Heart right ventricle (tissue), 16 donors: ENCODE measurements at regions of chr6 and their contacts with region 1.

Region 1: DNA sequence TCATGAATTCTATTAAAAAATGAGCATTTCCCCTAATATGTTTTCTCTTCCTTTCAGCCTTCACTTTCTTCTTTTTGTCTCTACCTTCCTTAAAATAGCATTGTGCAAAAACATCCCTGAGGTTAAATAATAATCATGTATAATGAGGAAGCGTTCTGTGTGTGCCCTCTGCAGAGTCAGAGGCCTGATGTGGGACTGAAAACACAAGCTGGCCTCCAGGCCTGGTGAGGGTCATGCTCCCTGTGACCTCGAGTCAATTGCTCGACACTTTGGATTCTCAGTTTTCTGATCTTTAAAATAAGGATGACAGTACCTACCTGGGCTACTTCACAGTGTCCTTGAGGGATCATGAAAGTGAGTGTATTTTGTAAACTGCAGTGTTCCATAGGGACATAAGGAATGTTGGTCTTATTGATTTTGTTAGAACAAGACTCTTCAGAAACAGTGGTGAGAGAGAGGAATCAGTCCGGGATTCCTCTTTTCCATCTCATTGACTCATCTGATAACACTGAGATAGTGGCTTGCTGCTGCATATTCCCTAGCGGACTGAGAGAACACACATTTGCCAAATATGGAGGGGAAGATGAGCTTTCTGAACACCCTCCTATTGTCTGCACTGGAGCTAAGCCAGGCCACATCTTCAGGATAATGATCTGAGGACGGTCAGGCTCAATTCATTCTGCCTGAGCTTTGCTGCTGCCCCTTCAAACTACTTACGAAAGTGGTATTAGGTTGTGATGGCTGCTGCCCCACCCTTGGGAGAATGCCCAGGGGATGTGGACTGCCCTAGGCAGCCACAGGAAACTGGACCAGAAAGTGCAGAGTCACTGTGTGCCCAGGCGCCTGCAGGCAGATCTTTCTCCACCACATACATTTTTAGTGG is 39.6 kb upstream of the PDE7B start:
- DNase-seq: peak; percentile 12 to 24
- ATAC-seq: peak in 7 of 8 donors; percentile 17 to 64 (median 47)
- H3K4me3 ChIP-seq: no peak overlapping the region
- H3K27ac ChIP-seq: peak overlapping the region in 8 of 10 donors; percentile 6 to 68 (median 31)
- H3K4me1 ChIP-seq: peaks cover 0 to 23% (median 11%) of the 10 kb centered on the region in 9 donors
- H3K27me3 ChIP-seq: no peaks in the 10 kb centered on the region
- CTCF ChIP-seq: no peak

Region 2: GRCh38 chr6:135693811-135694370 is 118.0 kb before region 1 on chr6:
- intact Hi-C with region 1: loop called in 1 of 10 experiments (anchors 10 kb)
- DNase-seq: no peak
- ATAC-seq: no peak
- H3K4me3 ChIP-seq: no peak overlapping the region
- H3K27ac ChIP-seq: no peak overlapping the region
- H3K4me1 ChIP-seq: no peaks in the 10 kb centered on the region
- H3K27me3 ChIP-seq: no peaks in the 10 kb centered on the region
- CTCF ChIP-seq: no peak

Region 3: DNA sequence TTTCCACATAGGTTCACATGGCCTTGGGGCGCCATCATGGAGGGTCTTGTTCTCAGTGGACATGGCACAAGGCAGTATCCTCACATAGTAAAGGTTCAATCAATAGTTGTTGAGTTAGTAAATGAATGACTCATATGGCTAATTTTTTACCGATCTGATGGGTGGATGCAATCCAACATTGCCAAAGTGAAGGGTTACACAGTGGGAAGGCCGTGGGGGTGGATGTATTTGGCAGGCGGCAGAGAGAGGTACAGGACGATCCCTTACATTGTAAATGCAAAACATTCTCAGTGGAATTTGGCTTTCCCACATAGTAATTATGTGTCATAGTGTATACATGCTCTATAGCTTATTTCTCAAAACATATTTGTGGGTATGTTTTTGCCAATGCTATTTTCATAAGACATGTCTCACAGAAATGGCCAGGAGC is 18.6 kb after region 1 on chr6:
- intact Hi-C with region 1: no loop called
- DNase-seq: no peak
- ATAC-seq: no peak
- H3K4me3 ChIP-seq: no peak overlapping the region
- H3K27ac ChIP-seq: no peak overlapping the region
- H3K4me1 ChIP-seq: no peaks in the 10 kb centered on the region
- H3K27me3 ChIP-seq: peaks cover 0 to 5% (median 0%) of the 10 kb centered on the region in 7 donors
- CTCF ChIP-seq: no peak

Region 4: GRCh38 chr6:135851442-135852271 is 39.8 kb after region 1 on chr6 and contains the start of gene PDE7B:
- intact Hi-C with region 1: loop called in 1 of 10 experiments (anchors 5 kb)
- DNase-seq: peak; percentile 81
- ATAC-seq: peak; percentile 93 to 99 (median 96)
- H3K4me3 ChIP-seq: peak within 1 kb of the TSS; percentile 2 to 58 (median 51)
- H3K27ac ChIP-seq: peak within 1 kb of the TSS; percentile 3 to 82 (median 70)
- H3K4me1 ChIP-seq: peaks cover 0 to 48% (median 14%) of the 10 kb centered on the region in 9 donors
- H3K27me3 ChIP-seq: no peaks in the 10 kb centered on the region
- CTCF ChIP-seq: no peak
- total RNA-seq, gene PDE7B: 4.3 to 19.6 (median 11.7) TPM

Region 5: DNA sequence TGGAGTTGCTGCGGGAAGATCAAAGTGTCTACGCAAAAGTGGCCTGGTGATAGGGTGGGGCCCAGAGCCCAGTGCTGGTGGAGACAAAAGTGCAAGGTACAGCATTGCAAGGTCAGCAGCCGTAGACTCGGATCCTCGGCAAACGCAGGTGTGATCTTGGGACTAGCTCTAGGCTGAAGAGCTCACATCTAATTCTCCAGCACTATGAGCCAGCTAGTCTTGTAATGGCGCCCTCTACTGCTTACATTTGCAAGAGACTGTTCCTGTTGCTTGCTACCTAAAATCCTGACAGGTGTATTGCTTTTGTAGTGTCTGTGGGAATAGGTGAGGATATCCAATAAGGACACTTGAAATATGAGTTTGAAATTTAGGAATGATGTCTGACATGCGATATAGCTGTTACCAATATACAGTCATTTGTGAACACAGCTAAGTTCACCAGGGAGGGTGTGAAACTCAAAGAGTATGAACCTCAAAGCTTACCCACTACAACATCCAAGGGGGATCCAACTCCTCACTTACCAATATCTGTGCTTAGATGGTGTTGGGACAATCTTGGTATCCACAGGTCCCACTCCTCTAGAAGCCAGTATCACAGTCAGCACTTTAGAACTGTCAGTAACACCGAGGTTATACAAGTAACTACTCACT is 98.0 kb after region 1 on chr6:
- intact Hi-C with region 1: loop called in 1 of 10 experiments (anchors 10 kb)
- DNase-seq: peak in 1 of 2 donors; percentile 38
- ATAC-seq: peak in 2 of 8 donors; percentile 35 to 45
- H3K4me3 ChIP-seq: no peak overlapping the region
- H3K27ac ChIP-seq: no peak overlapping the region
- H3K4me1 ChIP-seq: peaks cover 0 to 6% (median 0%) of the 10 kb centered on the region in 9 donors
- H3K27me3 ChIP-seq: no peaks in the 10 kb centered on the region
- CTCF ChIP-seq: peak in 7 of 9 donors; percentile 34 to 67 (median 52)

Region 6: GRCh38 chr6:136059308-136059707 is 247.4 kb after region 1 on chr6:
- intact Hi-C with region 1: no loop called
- DNase-seq: peak; percentile 27 to 33
- ATAC-seq: peak in 4 of 8 donors; percentile 40 to 58 (median 50)
- H3K4me3 ChIP-seq: no peak overlapping the region
- H3K27ac ChIP-seq: peak overlapping the region in 6 of 10 donors; percentile 18 to 53 (median 22)
- H3K4me1 ChIP-seq: peaks cover 4 to 71% (median 33%) of the 10 kb centered on the region in 9 donors
- H3K27me3 ChIP-seq: no peaks in the 10 kb centered on the region
- CTCF ChIP-seq: no peak